Right ventricle myocardium inferior (tissue), 1 donor: ENCODE measurements at regions of chr4 and their contacts with region 1.

Region 1: GRCh38 chr4:39697740-39698423 is at the start of gene UBE2K:
- DNase-seq: peak; percentile 95
- ATAC-seq: peak; percentile 100
- total RNA-seq, gene UBE2K: 56.6 TPM

Region 2: GRCh38 chr4:39527273-39528060 is 170.4 kb before region 1 on chr4 and contains the start of gene UGDH:
- intact Hi-C with region 1: loop called (anchors 5 kb)
- DNase-seq: peak; percentile 98
- ATAC-seq: peak; percentile 99
- total RNA-seq, gene UGDH: 16.6 TPM

Region 3: GRCh38 chr4:39638354-39639240 is 59.3 kb before region 1 on chr4 and contains the start of gene SMIM14:
- intact Hi-C with region 1: loop called (anchors 5 kb)
- DNase-seq: peak; percentile 99
- ATAC-seq: peak; percentile 99
- total RNA-seq, gene SMIM14: 11.0 TPM

Region 4: GRCh38 chr4:39846120-39846519 is 148.2 kb after region 1 on chr4:
- intact Hi-C with region 1: loop called (anchors 10 kb)
- DNase-seq: no peak
- ATAC-seq: no peak

Region 5: GRCh38 chr4:40056716-40057585 is 359.1 kb after region 1 on chr4 and contains the start of gene N4BP2:
- intact Hi-C with region 1: loop called (anchors 5 kb)
- DNase-seq: peak; percentile 94
- ATAC-seq: peak; percentile 86
- total RNA-seq, gene N4BP2: 4.1 TPM